ENCODE measurements at regions of chr20 and their contacts with region 1.

Region 1: GRCh38 chr20:1108437-1108920 is 9.9 kb upstream of the PSMF1 start:
- DNase-seq: peak in 1 of 2 experiments; percentile 82
- H3K4me3 ChIP-seq: no peak overlapping the region
- H3K27ac ChIP-seq: no peak overlapping the region
- H3K4me1 ChIP-seq: no peaks in the 10 kb centered on the region
- H3K27me3 ChIP-seq: 0 out of 7 replicates have a peak, but pooled peaks cover 0 to 2% (median 0%) of the 10 kb centered on the region in 4 experiments
- CTCF ChIP-seq: peak; percentile 72 to 87 (median 81)
- EP300 ChIP-seq: no peak
- POLR2A ChIP-seq: no peak
- RAD21 ChIP-seq: peak; percentile 84

Region 2: GRCh38 chr20:1020614-1021013 is 87.9 kb before region 1 on chr20:
- CTCF ChIA-PET with region 1: interaction called, 12 read pairs
- POLR2A ChIA-PET with region 1: no interaction called
- DNase-seq: no peak
- H3K4me3 ChIP-seq: no peak overlapping the region
- H3K27ac ChIP-seq: no peak overlapping the region
- H3K4me1 ChIP-seq: no peaks in the 10 kb centered on the region
- H3K27me3 ChIP-seq: no peaks in the 10 kb centered on the region
- CTCF ChIP-seq: no peak
- EP300 ChIP-seq: no peak
- POLR2A ChIP-seq: no peak
- RAD21 ChIP-seq: no peak

Region 3: GRCh38 chr20:1083431-1084080 is 24.9 kb before region 1 on chr20:
- CTCF ChIA-PET with region 1: interaction called, 12 read pairs
- POLR2A ChIA-PET with region 1: no interaction called
- DNase-seq: no peak
- H3K4me3 ChIP-seq: no peak overlapping the region
- H3K27ac ChIP-seq: no peak overlapping the region
- H3K4me1 ChIP-seq: no peaks in the 10 kb centered on the region
- H3K27me3 ChIP-seq: no peaks in the 10 kb centered on the region
- CTCF ChIP-seq: no peak
- EP300 ChIP-seq: no peak
- POLR2A ChIP-seq: no peak
- RAD21 ChIP-seq: no peak

Region 4: GRCh38 chr20:1118336-1119127 is 10.1 kb after region 1 on chr20 and contains the start of gene PSMF1:
- CTCF ChIA-PET with region 1: interaction called, 10 read pairs
- POLR2A ChIA-PET with region 1: interaction called, 3 read pairs
- DNase-seq: peak; percentile 80 to 98
- H3K4me3 ChIP-seq: peak within 1 kb of the TSS; percentile 95 to 98 (median 97)
- H3K27ac ChIP-seq: peak within 1 kb of the TSS; percentile 59
- H3K4me1 ChIP-seq: peaks cover 0 to 7% (median 2%) of the 10 kb centered on the region in 4 experiments; a peak in 4 of 7 replicates
- H3K27me3 ChIP-seq: no peaks in the 10 kb centered on the region
- CTCF ChIP-seq: no peak
- EP300 ChIP-seq: peak in 1 of 2 experiments; percentile 77; a peak in 2 of 3 replicates
- POLR2A ChIP-seq: peak; percentile 25 to 89
- RAD21 ChIP-seq: peak in 1 of 2 experiments; percentile 4; a peak in 1 of 4 replicates
- total RNA-seq, gene PSMF1: 106 and 118 TPM in 2 replicates

Measured in H1 (cell line).